ENCODE measurements at regions of chrX and their contacts with region 1.

Region 1: GRCh38 chrX:63746278-63746677 is 38.7 kb downstream of the ARHGEF9 start:
- DNase-seq: no peak
- H3K4me3 ChIP-seq: no peak overlapping the region
- H3K27ac ChIP-seq: no peak overlapping the region
- H3K4me1 ChIP-seq: peaks cover 18% of the 10 kb centered on the region
- H3K27me3 ChIP-seq: no peaks in the 10 kb centered on the region
- CTCF ChIP-seq: no peak
- POLR2A ChIP-seq: no peak

Region 2: GRCh38 chrX:63350941-63351616 is 395.2 kb before region 1 on chrX and contains the start of gene SPIN4:
- CTCF ChIA-PET with region 1: no interaction called
- POLR2A ChIA-PET with region 1: no interaction called
- dilution Hi-C with region 1: no loop called
- intact Hi-C with region 1: loop called (anchors 5 kb)
- DNase-seq: peak; percentile 93
- H3K4me3 ChIP-seq: peak within 1 kb of the TSS; percentile 10 to 63 (median 41)
- H3K27ac ChIP-seq: peak within 1 kb of the TSS; percentile 23
- H3K4me1 ChIP-seq: peaks cover 9% of the 10 kb centered on the region
- H3K27me3 ChIP-seq: no peaks in the 10 kb centered on the region
- CTCF ChIP-seq: no peak
- POLR2A ChIP-seq: peak; percentile 50
- total RNA-seq, gene SPIN4: 5.8 and 7.5 TPM in 2 replicates

Region 3: GRCh38 chrX:63560601-63561218 is 185.6 kb before region 1 on chrX:
- CTCF ChIA-PET with region 1: no interaction called
- POLR2A ChIA-PET with region 1: no interaction called
- dilution Hi-C with region 1: no loop called
- intact Hi-C with region 1: loop called (anchors 10 kb)
- DNase-seq: peak; percentile 81
- H3K4me3 ChIP-seq: peak overlapping the region; percentile 64 to 93 (median 82)
- H3K27ac ChIP-seq: peak overlapping the region; percentile 21
- H3K4me1 ChIP-seq: no peaks in the 10 kb centered on the region
- H3K27me3 ChIP-seq: no peaks in the 10 kb centered on the region
- CTCF ChIP-seq: no peak
- POLR2A ChIP-seq: no peak